Heart right ventricle (tissue), 16 donors: ENCODE measurements at regions of chr13 and their contacts with region 1.

Region 1: GRCh38 chr13:47598340-47598911 is 402.6 kb downstream of the SUCLA2 start:
- DNase-seq: no peak
- ATAC-seq: no peak
- H3K4me3 ChIP-seq: no peak overlapping the region
- H3K27ac ChIP-seq: no peak overlapping the region
- H3K4me1 ChIP-seq: no peaks in the 10 kb centered on the region
- H3K27me3 ChIP-seq: no peaks in the 10 kb centered on the region
- CTCF ChIP-seq: peak in 7 of 9 donors; percentile 22 to 51 (median 36)

Region 2: GRCh38 chr13:47415048-47415447 is 183.4 kb before region 1 on chr13:
- intact Hi-C with region 1: loop called in 8 of 10 experiments (anchors 1 to 10 kb)
- DNase-seq: no peak
- ATAC-seq: no peak
- H3K4me3 ChIP-seq: no peak overlapping the region
- H3K27ac ChIP-seq: no peak overlapping the region
- H3K4me1 ChIP-seq: no peaks in the 10 kb centered on the region
- H3K27me3 ChIP-seq: no peaks in the 10 kb centered on the region
- CTCF ChIP-seq: no peak

Region 3: DNA sequence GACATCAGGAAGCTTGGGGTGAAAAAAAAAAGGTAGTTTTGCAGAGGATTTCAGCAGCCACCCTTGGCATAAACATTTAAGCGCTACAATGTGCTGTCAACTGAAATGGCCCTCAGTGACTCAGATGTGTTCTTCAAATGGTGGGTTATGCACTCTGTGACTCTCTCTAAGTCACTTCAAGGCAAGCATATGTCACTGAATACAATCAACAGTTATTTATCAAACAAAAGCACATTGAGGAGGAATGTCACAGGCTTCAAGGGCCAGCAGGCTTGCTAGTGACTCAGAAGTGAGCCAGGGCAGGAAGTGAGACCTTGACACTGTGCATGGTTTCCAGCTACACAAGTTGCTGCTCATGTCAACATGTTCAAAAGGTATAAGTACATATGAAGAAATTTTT is 177.9 kb before region 1 on chr13:
- intact Hi-C with region 1: loop called in 8 of 10 experiments (anchors 1 to 10 kb)
- DNase-seq: no peak
- ATAC-seq: peak in 3 of 8 donors; percentile 21 to 72 (median 42)
- H3K4me3 ChIP-seq: no peak overlapping the region
- H3K27ac ChIP-seq: no peak overlapping the region
- H3K4me1 ChIP-seq: no peaks in the 10 kb centered on the region
- H3K27me3 ChIP-seq: no peaks in the 10 kb centered on the region
- CTCF ChIP-seq: no peak